GM18951 (cell line): ENCODE measurements at regions of chr2 and their contacts with region 1.

Region 1: DNA sequence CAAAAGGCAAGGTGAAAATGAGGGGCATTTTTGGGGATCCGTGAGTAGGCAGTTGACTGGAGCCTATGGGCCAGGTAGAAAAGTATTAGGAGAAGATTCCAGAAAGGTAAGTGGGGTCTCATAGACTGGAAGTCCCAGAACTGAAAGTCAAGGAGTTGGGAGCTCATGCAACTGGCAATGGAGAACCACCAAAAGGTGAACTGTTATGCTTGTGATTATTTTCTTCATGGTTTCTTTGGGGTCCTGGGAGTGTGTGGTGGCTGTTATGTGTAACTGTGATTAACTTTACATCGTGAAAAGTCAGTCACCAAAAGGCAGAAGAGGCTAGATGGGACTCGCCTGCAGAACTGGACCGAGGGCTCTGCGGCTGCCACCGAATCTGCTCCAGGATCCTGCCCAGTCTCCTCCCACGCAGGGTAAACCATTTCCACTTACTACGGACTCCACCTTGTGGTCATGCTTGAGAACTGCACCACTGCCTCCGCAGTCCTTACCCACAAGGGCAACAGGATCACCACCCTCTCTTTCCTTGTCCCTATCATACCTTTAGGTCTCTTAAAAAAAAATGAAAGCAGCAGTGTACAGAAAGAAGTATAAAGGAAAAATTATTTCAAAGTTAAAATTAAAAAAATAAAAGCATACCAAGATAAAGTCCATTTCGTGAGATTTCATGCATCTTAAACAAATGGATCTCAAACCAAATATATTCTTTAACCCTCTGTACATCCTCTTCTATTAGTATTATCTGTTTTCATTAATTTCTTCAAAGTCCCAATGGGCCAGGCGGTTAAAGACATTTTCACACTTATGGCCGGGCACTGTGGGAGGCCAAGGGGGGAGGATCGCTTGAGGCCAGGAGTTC is 15.6 kb upstream of the CEP68 start:
- POLR2A ChIP-seq: no peak

Region 2: DNA sequence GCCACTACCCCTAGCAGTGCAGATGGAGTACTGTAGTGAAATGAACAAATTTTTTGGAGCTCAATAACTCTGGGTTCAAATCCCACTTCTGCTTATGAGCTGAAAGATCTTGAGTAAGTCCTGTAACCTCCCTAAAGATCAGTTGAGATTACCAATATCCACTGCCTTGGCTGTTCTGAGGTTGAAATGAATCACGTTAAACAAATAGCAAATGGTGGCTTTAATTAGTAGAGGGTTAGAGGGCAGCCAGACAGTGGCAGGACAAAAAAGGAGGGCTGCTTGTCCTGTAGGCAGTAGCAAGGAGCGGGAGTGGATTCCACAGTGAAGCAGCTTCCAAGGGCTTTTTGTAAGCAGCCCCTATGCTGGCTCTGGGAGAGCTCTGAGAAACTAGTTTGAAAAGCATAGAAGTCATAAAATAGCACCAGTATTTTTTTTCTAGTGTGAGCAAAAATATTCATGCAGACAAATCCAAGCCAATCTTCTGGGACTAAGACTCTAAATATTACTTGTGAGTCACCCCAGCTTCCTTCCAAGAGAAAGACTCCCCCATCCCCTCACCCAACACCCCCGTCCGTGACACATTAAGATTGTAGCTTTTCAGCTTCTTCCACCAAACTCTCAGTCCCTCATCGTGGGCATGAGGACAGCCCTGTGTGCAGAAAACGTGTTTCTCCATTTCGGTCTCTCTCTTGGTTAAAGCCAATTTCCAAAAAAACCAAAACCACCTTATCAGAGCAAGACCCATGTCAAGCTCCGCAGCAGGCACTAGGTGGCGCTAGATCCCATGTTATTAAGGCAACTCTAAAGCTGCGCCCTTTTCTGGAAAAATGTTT is 710.1 kb before region 1 on chr2:
- in situ Hi-C with region 1: loop called (anchors 25 kb)
- POLR2A ChIP-seq: no peak

Region 3: DNA sequence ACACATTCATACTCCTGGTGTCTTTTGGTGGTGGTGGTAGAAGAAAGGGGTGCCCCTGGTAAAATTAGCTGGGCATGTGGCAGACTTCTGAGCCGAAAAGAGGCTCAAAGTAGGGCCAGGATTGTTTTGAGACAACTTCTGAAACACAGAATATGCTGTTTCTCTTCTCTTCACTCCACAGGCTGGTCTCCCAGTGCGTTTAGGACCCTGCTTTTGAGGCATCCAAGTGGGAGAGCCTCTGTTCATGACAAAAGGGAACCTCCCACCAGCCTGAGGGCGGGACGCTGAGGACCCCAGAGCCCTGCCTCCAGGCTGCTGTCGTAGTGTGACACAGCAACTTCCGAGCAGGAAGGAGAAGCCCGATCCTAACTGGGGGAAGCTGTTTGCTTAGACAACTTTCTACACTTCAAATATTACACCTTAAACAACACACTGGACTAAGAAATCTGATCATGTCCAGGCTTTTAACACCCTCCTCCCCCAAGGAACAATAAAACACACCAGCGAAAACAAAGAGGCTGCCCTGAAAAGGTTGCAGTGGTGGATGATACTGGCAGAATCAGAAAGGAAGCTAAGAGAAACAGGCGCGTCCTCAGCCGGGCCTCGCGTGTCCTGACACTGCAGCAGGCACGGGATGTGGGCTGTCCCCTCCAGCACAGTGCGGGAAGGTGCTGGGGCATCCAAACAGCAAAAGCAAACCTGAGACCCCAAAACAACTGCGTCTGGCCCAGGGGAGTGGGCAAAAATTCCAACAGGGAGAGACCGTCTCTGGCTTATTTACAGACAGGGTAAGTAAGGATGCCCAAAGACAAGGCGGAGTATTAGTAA is 396.2 kb before region 1 on chr2:
- in situ Hi-C with region 1: loop called (anchors 25 kb)
- POLR2A ChIP-seq: peak; percentile 72

Region 4: DNA sequence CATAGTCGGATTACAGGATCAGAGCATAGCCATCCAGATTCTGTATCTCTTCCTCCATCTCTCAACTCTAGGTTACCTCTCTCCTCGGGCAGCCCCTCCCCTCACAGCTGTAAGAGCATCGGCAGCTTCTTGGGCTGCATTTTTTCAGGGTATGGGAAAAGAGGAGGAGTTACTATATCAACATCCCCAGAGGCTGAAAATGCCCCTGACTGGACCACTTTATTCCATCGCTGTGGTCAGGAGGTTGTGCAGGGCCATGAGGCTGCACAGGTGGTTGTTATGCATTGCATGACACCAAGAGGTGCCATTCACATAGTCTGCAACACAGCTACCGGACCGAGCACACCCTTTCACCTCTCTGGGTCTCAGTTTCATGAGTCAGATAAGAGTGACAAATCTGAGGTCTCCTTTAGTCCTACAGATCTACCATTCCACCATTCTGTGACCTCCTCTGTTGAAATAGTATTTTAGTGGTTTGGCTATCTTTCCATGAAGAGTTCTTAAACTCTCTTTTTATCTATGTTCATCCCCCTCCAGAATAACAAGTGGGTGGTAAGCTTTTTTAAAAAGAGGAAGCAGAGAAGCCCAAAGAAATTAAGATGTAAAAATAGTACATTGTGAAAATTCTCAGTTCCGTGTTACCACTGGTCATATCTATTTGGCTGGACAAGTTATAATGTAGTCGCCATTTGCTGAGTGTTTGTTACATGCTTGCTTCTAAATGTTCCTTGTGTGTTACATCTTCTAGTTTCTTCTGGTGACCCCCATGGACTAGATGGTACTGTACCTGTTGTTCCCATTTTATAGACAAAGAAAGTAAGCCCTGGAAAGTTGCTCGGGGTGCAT is 108.0 kb before region 1 on chr2:
- in situ Hi-C with region 1: no loop called
- POLR2A ChIP-seq: peak; percentile 56

Region 5: GRCh38 chr2:65153514-65153913 is 112.9 kb after region 1 on chr2:
- in situ Hi-C with region 1: no loop called
- POLR2A ChIP-seq: no peak

Region 6: GRCh38 chr2:65278531-65278981 is 237.9 kb after region 1 on chr2:
- in situ Hi-C with region 1: no loop called
- POLR2A ChIP-seq: no peak

Region 7: GRCh38 chr2:66387016-66387753 is 1346.6 kb after region 1 on chr2:
- in situ Hi-C with region 1: no loop called
- POLR2A ChIP-seq: no peak